Activated B cell treated with CpG ODN at 0.5 μM for 24 hours (primary cell): ENCODE measurements at regions of chr15 and their contacts with region 1.

Region 1: GRCh38 chr15:65028921-65029735 is at the start of gene MTFMT:
- DNase-seq: peak; percentile 91
- ATAC-seq: peak; percentile 96
- H3K4me3 Mint-ChIP-seq: peak within 1 kb of the TSS; percentile 85
- H3K27ac Mint-ChIP-seq: peak within 1 kb of the TSS; percentile 13
- H3K4me1 Mint-ChIP-seq: peaks cover 23% of the 10 kb centered on the region
- H3K27me3 Mint-ChIP-seq: peaks cover 7% of the 10 kb centered on the region
- CTCF ChIP-seq: no peak
- total RNA-seq, gene MTFMT: 9.8 and 13.5 TPM in 2 replicates

Region 2: GRCh38 chr15:64989416-64990167 is 39.5 kb before region 1 on chr15 and contains the start of gene SPG21:
- CTCF ChIA-PET with region 1: no interaction called
- POLR2A ChIA-PET with region 1: interaction called, 5 read pairs
- intact Hi-C with region 1: loop called (anchors 1 kb)
- DNase-seq: peak; percentile 97
- ATAC-seq: peak; percentile 95
- H3K4me3 Mint-ChIP-seq: peak within 1 kb of the TSS; percentile 91
- H3K27ac Mint-ChIP-seq: peak within 1 kb of the TSS; percentile 86
- H3K4me1 Mint-ChIP-seq: peaks cover 48% of the 10 kb centered on the region
- H3K27me3 Mint-ChIP-seq: no peaks in the 10 kb centered on the region
- CTCF ChIP-seq: no peak
- total RNA-seq, gene SPG21: 74.7 and 75.7 TPM in 2 replicates

Region 3: DNA sequence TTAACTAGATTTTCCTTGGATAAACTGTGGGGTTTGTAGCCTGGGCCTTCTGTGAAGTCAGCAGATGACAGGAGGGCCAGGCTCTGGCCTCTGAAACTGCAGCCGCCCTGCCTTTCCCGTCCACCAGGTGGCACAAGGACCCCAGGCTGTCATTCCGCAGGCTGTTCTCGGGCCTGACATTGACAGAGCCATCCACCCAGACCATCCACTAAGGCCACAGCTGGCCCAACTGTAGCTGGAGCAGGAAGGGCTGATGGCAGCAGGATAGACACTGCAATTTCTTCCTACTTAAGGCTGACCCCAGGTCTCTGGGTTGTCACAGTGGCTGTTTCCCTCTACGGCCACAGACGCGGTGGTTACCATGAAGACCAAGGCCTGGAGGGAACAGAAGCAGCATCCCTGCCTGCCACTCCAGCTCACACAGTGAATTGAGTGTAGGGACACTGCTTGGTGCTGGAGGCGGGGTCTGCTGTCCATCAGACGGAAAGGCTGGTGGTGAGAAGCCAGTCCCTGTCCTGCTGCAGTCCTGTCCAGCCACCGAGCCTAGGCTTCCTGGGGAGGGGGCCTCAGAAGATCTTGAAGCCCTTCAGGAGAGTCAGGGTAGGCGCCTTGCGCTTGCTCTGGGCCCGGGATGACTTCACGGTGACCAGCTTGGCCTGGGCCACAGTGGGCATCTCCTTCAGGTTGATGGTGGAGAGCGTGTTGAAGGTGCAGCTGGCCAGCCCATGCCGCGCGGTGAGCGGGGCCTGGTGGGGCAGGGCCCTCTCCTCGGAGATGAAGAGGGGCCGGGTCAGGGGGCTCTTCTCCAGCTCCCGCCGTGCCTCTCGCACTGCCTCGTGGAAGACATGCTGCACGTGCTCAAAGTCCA is 25.4 kb after region 1 on chr15:
- CTCF ChIA-PET with region 1: no interaction called
- POLR2A ChIA-PET with region 1: no interaction called
- intact Hi-C with region 1: loop called (anchors 1 kb)
- DNase-seq: peak; percentile 44
- ATAC-seq: peak; percentile 61
- H3K4me3 Mint-ChIP-seq: no peak overlapping the region
- H3K27ac Mint-ChIP-seq: no peak overlapping the region
- H3K4me1 Mint-ChIP-seq: peaks cover 12% of the 10 kb centered on the region
- H3K27me3 Mint-ChIP-seq: no peaks in the 10 kb centered on the region
- CTCF ChIP-seq: no peak

Region 4: GRCh38 chr15:65101411-65101890 is 72.3 kb after region 1 on chr15:
- CTCF ChIA-PET with region 1: no interaction called
- POLR2A ChIA-PET with region 1: no interaction called
- intact Hi-C with region 1: loop called (anchors 2 kb)
- DNase-seq: no peak
- ATAC-seq: no peak
- H3K4me3 Mint-ChIP-seq: no peak overlapping the region
- H3K27ac Mint-ChIP-seq: no peak overlapping the region
- H3K4me1 Mint-ChIP-seq: no peaks in the 10 kb centered on the region
- H3K27me3 Mint-ChIP-seq: no peaks in the 10 kb centered on the region
- CTCF ChIP-seq: no peak

Region 5: DNA sequence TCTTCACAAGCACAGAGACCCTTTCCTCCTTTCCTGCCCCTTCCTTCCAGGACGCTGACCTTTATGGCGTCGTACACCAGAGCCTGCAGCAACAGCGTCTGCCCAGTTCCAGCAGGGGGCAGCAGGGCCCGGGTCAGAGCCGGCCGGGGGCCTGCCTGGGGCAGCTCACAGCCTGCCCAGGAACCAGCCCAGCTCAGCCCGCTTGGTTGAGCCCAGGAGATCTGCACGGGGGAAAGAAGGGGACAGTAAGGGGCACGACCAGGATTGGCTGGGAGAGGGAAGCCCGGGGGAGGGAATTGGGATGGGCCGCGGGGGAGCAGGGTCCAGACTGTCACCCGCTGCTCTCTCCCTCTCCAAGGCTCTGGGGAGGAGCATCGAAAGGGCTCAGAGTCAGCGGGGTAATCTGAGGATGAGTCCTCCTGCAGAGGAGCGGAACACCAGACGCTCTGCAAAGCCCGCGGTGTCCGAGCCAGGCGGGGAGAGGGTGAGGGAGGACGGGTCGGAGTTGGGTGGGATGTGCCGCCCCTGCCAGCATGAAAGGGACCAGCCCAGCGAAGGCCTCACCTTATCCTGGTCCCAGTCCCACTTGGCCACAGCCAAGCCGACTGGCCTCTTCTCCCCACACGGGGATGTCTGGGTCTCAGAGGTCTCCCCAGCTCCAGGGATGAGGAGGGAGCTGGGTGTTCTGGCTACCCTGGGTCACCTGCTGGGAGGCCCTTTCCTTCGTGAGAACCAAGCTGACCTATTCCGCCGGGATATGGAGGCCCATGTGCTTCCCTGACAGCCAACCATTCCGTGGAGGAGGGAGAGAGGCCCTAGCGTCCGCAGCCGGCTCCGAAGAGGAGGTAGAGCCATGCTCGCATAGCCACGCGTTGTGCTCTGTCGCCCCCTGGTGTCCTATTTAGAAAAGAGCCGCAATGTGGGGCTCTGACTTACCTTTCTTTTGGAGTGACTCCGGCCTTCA is 356.0 kb after region 1 on chr15:
- CTCF ChIA-PET with region 1: no interaction called
- POLR2A ChIA-PET with region 1: interaction called, 4 read pairs
- intact Hi-C with region 1: loop called (anchors 1 kb)
- DNase-seq: peak; percentile 68
- ATAC-seq: peak; percentile 84
- H3K4me3 Mint-ChIP-seq: peak overlapping the region; percentile 89
- H3K27ac Mint-ChIP-seq: no peak overlapping the region
- H3K4me1 Mint-ChIP-seq: peaks cover 10% of the 10 kb centered on the region
- H3K27me3 Mint-ChIP-seq: peaks cover 20% of the 10 kb centered on the region
- CTCF ChIP-seq: peak; percentile 12